ENCODE measurements at regions of chr17 and their contacts with region 1.

Region 1: GRCh38 chr17:13031718-13032350 is 14.0 kb upstream of the ELAC2 start:
- DNase-seq: no peak
- H3K4me3 ChIP-seq: no peak overlapping the region
- H3K27me3 ChIP-seq: no peaks in the 10 kb centered on the region
- CTCF ChIP-seq: peak; percentile 84

Region 2: DNA sequence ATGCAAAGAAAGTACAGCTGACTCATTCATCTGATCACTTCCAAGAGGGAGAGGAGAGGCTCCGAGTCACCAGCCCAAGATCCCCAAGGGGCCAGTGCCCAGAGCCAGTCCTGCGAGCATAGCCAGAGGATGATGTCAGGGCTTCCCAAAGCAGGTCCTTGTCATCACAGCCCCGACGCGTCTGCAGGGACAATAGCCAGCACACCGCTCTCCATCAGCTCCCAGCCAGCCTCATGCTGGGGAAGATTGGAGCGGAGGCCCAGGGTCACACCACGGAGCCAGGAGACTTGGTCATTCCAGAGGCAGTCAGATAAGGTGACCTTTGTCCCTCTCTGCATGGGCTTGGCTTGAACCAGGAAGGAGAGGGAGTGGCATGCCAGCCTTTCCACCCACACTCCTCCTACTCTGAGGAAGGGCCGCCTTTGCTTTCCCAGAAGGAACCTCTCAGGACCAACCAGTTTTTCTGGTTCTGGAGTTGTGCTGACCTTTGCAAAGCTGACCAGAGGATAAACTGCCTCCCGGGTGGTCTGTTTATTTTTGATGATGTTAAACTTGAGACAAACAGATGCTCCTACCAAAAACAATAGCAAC is 300.8 kb before region 1 on chr17:
- CTCF ChIA-PET with region 1: no interaction called
- POLR2A ChIA-PET with region 1: no interaction called
- DNase-seq: no peak
- H3K4me3 ChIP-seq: no peak overlapping the region
- H3K27me3 ChIP-seq: no peaks in the 10 kb centered on the region
- CTCF ChIP-seq: no peak

Region 3: DNA sequence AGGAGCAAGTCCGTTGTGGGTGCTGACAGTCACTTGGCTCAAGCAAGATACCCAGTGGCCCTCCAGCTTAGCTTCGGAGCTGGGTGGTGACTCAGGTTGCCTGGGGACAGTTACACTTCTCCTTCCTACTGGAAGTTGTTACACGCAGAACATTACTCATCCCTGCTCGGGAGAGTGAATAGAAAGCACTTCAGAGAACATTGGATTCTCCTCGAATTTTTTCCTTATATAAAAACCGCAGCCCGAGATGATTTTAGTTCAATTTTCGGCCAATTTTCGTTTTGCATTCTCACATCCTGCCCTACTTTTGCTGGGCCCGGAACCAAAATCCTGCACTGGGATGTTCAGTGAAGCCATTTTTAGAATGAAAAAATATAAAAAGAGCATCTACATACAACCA is 113.7 kb before region 1 on chr17:
- CTCF ChIA-PET with region 1: no interaction called
- POLR2A ChIA-PET with region 1: no interaction called
- DNase-seq: no peak
- H3K4me3 ChIP-seq: no peak overlapping the region
- H3K27me3 ChIP-seq: no peaks in the 10 kb centered on the region
- CTCF ChIP-seq: no peak

Region 4: DNA sequence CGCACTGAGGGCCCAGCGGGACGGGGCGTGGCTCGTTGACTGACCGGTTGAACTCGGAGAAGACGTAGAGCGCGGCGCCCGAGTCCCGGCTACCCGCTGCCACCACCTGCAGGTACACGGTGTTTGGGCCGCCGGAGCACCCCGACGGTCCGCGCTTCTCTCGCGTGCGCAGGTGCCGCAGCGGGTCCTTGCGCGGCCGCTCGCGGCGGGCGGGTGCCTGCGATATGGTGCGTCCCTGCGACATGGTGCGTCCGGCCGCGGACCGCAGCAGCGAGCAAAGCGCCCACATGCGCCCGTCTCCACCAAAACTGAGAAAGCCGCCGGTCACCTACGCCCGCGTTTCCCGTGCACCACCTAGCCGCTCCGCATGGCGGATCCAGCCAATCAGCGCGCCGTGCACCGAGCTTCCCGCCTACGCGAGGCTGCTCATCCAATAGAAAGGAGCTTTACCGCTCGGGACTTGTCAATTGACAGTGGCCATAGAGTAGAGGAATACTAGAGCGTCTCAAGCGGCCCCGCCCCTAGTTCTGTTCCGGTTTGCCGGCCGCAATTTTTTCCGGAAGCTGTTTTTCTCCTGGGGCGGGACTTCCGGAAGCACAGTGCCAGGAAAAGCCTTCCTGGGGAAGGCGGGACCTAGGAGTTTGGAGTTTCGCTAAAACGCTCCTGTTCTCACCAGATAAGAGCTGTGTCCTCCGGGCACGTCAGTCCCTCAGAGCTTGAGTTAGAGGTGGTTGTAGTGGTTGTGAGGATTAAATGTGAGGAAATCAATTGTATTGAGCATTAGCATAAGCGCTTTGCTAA is 14.0 kb before region 1 on chr17 and contains the start of gene ELAC2:
- CTCF ChIA-PET with region 1: interaction called, 68 read pairs
- POLR2A ChIA-PET with region 1: interaction called, 7 read pairs
- DNase-seq: peak; percentile 88
- H3K4me3 ChIP-seq: peak within 1 kb of the TSS; percentile 79
- H3K27me3 ChIP-seq: no peaks in the 10 kb centered on the region
- CTCF ChIP-seq: no peak
- polyA plus RNA-seq, gene ELAC2: 48.4 and 71.0 TPM in 2 replicates

Region 5: DNA sequence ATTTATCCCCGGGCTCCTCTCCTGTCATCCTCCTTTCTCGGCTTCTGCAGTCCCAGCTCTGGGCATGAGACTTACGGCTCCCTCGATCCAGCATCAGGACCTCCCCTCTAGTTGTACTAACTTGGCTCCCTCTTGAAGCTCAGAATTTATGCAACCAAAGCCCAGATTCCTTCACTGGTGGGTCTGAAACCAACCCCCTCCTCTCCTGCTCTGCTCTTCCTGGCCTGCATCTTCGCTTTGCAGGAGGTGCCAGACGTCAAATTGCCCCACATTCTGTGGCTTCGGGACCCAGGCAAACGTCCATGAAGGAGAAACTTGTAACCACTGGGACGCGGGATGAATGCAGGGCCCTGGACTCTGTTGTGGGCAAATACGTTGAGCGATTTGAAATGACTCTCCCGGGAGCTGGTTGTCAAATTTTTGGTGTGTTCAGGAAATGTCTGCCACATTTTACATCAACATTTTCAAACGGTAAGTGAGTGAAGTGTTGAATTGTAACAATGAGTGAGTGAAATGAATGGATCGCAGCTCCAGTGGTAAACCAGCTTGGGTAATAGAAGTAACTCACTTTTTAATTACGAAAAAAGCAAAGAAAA is 15.3 kb after region 1 on chr17:
- CTCF ChIA-PET with region 1: interaction called, 47 read pairs
- POLR2A ChIA-PET with region 1: no interaction called
- DNase-seq: no peak
- H3K4me3 ChIP-seq: no peak overlapping the region
- H3K27me3 ChIP-seq: no peaks in the 10 kb centered on the region
- CTCF ChIP-seq: no peak

Region 6: GRCh38 chr17:13134050-13134449 is 102.2 kb after region 1 on chr17:
- CTCF ChIA-PET with region 1: no interaction called
- POLR2A ChIA-PET with region 1: no interaction called
- DNase-seq: no peak
- H3K4me3 ChIP-seq: no peak overlapping the region
- H3K27me3 ChIP-seq: no peaks in the 10 kb centered on the region
- CTCF ChIP-seq: no peak